ENCODE measurements at regions of chrX and their contacts with region 1.

Region 1: DNA sequence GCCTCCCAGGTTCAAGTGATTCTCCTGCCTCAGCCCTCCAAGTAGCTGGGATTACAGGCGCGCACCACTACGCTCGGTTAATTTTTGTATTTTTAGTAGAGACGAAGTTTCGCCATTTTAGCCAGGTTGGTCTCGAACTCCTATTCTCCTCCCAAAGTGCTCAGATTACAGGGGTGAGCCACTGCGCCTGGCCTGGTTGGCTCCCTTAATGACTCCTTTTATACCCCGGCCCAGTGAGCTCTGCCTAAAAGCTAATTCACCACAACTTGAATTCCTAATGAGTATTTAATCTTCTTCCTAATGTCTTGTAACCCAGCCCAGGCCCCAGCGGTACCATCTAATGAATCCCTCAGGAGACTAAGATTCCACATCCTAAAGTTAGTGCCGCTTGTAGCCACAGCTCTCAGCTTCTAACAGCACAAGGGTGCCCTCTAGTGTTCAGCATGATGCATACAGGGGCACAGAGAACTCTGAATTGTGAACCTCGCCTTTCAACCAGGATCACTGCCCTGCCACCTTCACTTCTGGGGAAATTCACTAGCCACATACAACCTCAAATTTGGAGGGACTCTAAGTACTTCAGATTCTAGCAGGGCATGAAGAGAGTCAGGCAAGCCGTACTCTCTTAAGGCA is 89.5 kb downstream of the OR13H1 start:
- DNase-seq: peak in 1 of 2 donors; percentile 14
- H3K4me3 ChIP-seq: no peak overlapping the region
- CTCF ChIP-seq: no peak
- POLR2A ChIP-seq: no peak

Region 2: DNA sequence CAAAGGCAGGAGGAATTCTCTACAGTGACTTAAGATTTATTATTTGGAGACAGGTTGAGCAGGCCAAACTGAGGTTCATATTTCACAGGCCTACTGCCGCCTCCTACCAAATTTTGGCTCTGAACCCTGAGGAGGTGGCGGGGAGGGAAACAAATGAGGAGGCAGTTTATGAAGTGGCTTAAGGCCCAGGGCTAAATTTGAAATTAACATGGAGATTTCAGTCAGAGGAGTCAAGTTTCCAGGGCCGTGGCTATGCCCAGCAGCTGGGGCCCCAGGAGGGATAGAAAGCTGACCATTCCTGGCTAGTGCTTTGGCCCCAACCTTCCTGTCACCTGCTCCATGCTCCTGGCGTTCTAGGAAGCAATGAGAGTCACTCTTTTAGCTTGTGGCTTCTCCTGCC is 648.6 kb before region 1 on chrX:
- intact Hi-C with region 1: loop called (anchors 10 kb)
- DNase-seq: no peak
- H3K4me3 ChIP-seq: no peak overlapping the region
- CTCF ChIP-seq: no peak
- POLR2A ChIP-seq: no peak

Region 3: DNA sequence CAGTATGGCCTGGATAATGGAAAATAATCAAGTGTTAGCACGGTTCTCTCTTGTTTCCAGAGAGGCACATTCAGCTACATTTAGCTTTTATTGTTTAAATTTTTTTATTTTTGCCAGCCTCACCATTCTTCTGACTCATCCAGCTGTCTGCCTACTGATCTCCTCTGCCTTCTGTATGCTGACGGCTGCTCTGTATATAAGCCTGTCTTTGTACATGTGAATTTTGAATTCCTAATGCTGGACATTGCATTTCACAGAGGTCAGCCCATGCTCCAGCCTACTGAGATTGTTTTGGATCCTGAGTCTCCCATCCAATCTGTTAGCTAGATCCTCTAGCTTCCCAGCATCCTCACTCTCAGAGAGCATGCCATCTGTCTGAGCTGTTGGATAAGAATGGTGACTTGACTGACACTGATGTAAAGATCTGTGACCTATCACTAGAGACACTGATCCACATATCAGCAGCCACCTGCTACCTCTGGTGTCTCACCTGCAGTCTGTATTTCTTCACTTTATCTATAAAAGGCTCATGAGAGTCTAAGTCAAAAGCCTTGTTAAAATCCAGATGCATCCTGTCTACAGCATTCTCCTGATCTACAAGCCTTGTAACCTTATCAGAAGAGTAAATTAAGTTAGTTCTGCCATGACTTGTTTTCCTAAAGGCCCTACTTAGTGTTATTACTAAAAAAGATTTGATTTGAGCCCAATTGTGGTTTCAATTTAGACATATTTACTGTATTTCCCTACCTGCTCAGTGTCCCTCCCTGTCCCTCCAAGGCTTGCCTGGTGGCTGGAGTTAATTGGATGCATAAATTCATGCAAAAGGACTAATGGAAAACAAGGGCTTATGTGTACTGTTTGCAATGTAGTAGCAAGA is 600.8 kb before region 1 on chrX:
- intact Hi-C with region 1: no loop called
- DNase-seq: no peak
- H3K4me3 ChIP-seq: no peak overlapping the region
- CTCF ChIP-seq: no peak
- POLR2A ChIP-seq: no peak

Region 4: GRCh38 chrX:131677655-131678628 is 44.5 kb after region 1 on chrX:
- intact Hi-C with region 1: no loop called
- DNase-seq: no peak
- H3K4me3 ChIP-seq: no peak overlapping the region
- CTCF ChIP-seq: no peak
- POLR2A ChIP-seq: no peak

Measured in lower leg skin (tissue), 4 donors.